ENCODE measurements at regions of chr6 and their contacts with region 1.

Region 1: DNA sequence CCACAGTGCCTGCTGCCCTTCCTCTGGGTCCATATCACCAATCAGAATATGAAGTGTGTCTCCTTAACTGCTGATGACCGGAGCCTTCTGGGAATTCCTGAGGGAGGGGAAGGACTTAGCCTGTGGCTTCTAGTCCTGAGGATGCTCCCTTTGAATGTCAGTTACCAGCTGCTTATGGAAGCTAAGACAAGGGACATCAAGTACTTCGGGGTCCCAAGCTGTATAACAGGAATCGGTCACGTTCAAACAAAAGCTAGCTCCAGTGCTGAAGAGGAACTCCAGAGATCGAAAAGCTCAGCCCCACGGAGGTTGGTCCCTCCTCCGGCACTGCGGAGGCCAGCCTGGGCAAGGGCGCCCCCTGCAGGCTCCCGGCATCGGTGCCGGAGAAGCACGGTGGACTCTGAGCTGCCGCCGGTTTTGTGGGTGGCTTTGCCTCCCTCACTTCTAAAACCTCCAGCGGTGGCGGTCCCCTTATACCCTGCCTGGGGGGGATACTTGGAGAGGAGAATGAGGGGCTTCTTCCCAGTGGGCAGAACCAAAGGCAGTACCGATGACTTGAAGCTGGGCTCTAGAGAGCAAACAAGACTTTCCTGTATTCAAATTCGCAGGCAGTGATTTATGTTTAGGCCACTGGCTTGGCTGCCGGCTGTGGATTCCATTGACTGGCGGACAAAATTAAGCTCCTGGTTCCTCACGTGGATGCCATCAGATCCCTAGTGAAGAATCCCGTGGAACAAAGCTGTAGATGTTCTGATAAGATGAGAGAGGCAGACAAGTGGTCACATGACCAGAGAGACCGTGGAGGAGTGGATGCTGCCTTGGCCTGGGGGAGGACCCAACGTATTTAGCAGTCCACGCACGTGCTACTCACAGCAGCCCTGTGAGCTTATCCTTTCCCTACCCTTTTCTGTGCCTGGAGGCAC is 16.2 kb upstream of the UBR2 start:
- DNase-seq: peak; percentile 82
- H3K4me3 Mint-ChIP-seq: peak overlapping the region; percentile 71
- H3K27ac Mint-ChIP-seq: peak overlapping the region; percentile 29
- H3K4me1 Mint-ChIP-seq: peaks cover 13% of the 10 kb centered on the region
- H3K27me3 Mint-ChIP-seq: peaks cover 18% of the 10 kb centered on the region

Region 2: GRCh38 chr6:42075159-42075838 is 472.4 kb before region 1 on chr6:
- intact Hi-C with region 1: loop called (anchors 5 kb)
- DNase-seq: peak; percentile 33
- H3K4me3 Mint-ChIP-seq: no peak overlapping the region
- H3K27ac Mint-ChIP-seq: no peak overlapping the region
- H3K4me1 Mint-ChIP-seq: peaks cover 8% of the 10 kb centered on the region
- H3K27me3 Mint-ChIP-seq: no peaks in the 10 kb centered on the region

Region 3: DNA sequence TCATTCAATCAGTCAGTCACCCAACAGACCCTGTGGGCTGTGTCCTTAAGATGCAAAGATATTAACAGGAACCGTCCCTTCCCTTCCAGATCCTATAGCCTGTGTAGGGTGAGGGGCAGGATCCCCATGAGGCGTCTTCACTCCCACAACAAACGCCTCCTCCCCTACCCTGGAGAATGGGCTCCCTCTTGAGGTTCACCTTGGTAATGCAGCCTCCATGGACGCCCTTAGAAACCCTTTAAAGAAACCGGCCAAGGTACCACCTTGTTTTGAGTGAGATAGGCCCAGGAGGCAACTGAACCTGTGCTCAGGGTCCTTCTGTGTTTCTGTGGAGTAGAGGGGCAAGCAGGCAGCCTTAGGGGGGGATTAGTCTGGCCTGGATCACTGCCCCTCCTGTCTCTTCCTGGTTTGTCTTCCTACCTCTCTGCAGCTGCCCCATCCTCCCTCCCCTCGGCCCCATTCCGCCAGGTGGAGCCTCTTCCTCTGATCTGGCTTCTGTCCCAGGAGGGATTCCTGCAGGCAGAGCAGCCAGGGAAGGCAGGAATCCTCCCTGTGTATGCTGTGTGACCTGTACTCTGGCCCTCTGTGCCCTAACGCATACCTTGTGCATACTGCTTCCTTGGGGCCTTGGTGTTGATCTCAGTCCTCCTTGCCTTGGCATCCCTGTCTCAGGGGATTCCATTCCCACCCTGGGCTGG is 381.1 kb before region 1 on chr6:
- intact Hi-C with region 1: loop called (anchors 2 kb)
- DNase-seq: peak; percentile 68
- H3K4me3 Mint-ChIP-seq: no peak overlapping the region
- H3K27ac Mint-ChIP-seq: no peak overlapping the region
- H3K4me1 Mint-ChIP-seq: peaks cover 7% of the 10 kb centered on the region
- H3K27me3 Mint-ChIP-seq: peaks cover 7% of the 10 kb centered on the region

Region 4: DNA sequence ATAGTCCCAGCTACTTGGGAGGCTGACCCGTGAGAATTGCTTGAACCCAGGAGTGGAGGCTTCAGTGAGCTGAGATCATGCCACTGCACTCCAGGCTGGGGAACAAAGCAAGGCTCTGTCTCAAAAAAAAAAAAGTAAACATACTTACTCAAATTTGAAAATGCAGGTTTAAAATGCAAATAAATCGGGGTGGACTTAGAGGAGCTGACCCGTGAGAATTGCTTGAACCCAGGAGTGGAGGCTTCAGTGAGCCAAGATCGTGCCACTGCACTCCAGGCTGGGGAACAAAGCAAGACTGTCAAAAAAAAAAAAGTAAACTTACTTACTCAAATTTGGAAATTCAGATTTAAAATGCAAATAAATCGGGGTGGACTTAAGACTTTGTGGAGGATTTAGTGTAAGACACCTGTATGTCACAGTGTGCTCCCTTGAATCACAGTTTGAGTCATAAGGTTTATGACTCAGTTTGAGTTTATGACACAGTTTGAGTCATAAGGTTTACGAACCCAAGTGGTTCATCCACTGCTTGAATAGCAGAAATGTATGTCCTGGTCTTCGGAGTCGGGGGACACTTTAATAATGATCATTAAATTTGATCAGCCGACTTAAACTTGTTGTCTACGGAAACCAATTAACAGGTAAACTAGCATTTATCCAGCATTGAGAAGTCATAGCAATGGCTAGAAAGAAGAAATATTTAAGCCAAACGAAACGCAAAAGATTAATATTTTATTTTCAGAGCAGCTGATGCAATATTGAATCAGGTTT is 323.3 kb before region 1 on chr6:
- intact Hi-C with region 1: loop called (anchors 2 kb)
- DNase-seq: no peak
- H3K4me3 Mint-ChIP-seq: peak overlapping the region; percentile 61
- H3K27ac Mint-ChIP-seq: peak overlapping the region; percentile 85
- H3K4me1 Mint-ChIP-seq: peaks cover 18% of the 10 kb centered on the region
- H3K27me3 Mint-ChIP-seq: no peaks in the 10 kb centered on the region

Region 5: GRCh38 chr6:42260972-42261371 is 286.7 kb before region 1 on chr6:
- intact Hi-C with region 1: loop called (anchors 1 kb)
- DNase-seq: no peak
- H3K4me3 Mint-ChIP-seq: no peak overlapping the region
- H3K27ac Mint-ChIP-seq: peak overlapping the region; percentile 61
- H3K4me1 Mint-ChIP-seq: peaks cover 14% of the 10 kb centered on the region
- H3K27me3 Mint-ChIP-seq: no peaks in the 10 kb centered on the region

Region 6: DNA sequence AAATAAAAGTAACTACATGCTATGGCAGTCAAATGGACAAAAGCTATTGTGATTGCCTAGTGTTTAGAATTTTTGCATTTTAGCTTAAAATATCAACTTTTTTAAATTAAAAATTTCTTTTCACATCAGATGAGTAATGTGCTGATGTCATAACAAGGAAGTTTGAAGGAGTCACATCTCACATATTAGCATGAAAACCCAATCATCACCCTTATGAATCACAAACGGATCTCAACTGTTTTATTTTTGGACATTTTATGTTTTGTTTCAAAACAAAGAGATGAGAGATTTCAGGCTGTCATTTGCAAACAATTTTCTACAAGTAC is 42.3 kb before region 1 on chr6:
- intact Hi-C with region 1: no loop called
- DNase-seq: no peak
- H3K4me3 Mint-ChIP-seq: no peak overlapping the region
- H3K27ac Mint-ChIP-seq: no peak overlapping the region
- H3K4me1 Mint-ChIP-seq: peaks cover 23% of the 10 kb centered on the region
- H3K27me3 Mint-ChIP-seq: peaks cover 6% of the 10 kb centered on the region

Region 7: DNA sequence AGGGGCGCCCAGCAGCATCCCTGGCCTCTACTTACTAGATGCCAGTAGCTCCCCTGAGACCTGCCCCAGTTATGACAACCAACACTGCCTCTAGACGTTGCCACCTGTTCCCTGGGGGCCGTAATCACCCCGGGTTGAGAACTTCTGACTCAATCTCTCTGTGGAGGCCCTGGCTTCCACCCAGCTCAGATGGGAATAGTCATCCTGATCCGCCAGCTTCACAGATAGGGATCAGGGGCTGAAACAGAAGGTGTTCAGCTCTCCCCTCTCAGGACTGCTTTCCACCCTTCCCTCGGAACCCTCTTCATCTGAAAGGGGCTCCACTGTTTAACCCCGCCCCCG is 1614.3 kb after region 1 on chr6:
- intact Hi-C with region 1: no loop called
- DNase-seq: no peak
- H3K4me3 Mint-ChIP-seq: no peak overlapping the region
- H3K27ac Mint-ChIP-seq: no peak overlapping the region
- H3K4me1 Mint-ChIP-seq: peaks cover 5% of the 10 kb centered on the region
- H3K27me3 Mint-ChIP-seq: peaks cover 10% of the 10 kb centered on the region

Measured in activated T-helper 1 cell treated with anti-CD3 and anti-CD28 coated beads, Interleukin-12 subunit alpha, Interleukin-12 subunit beta, Interleukin-2, Interleukin-4 antibody, amounts not matched to agents 30 ng/mL and 10 ng/mL and 1 ng/mL, durations not matched to agents 14 hours and 24 hours and 36 hours (primary cell).